CD8-positive, alpha-beta T cell (primary cell): ENCODE measurements at regions of chr12 and their contacts with region 1.

Region 1: GRCh38 chr12:69173368-69173767 is 66.0 kb upstream of the CPSF6 start:
- DNase-seq: no peak
- ATAC-seq: no peak
- H3K4me3 ChIP-seq: no peak overlapping the region
- H3K4me3 Mint-ChIP-seq: no peak overlapping the region
- H3K27ac ChIP-seq: no peak overlapping the region
- H3K27ac Mint-ChIP-seq: no peak overlapping the region
- H3K4me1 ChIP-seq: no peaks in the 10 kb centered on the region
- H3K4me1 Mint-ChIP-seq: no peaks in the 10 kb centered on the region
- H3K27me3 ChIP-seq: no peaks in the 10 kb centered on the region
- H3K27me3 Mint-ChIP-seq: peaks cover under 1% of the 10 kb centered on the region
- CTCF ChIP-seq: no peak

Region 2: GRCh38 chr12:69136931-69137613 is 36.3 kb before region 1 on chr12:
- CTCF ChIA-PET with region 1: no interaction called
- POLR2A ChIA-PET with region 1: no interaction called
- intact Hi-C with region 1: no loop called
- DNase-seq: no peak
- ATAC-seq: no peak
- H3K4me3 ChIP-seq: no peak overlapping the region
- H3K4me3 Mint-ChIP-seq: no peak overlapping the region
- H3K27ac ChIP-seq: no peak overlapping the region
- H3K27ac Mint-ChIP-seq: no peak overlapping the region
- H3K4me1 ChIP-seq: no peaks in the 10 kb centered on the region
- H3K4me1 Mint-ChIP-seq: no peaks in the 10 kb centered on the region
- H3K27me3 ChIP-seq: no peaks in the 10 kb centered on the region
- H3K27me3 Mint-ChIP-seq: peaks cover 8% of the 10 kb centered on the region
- CTCF ChIP-seq: no peak

Region 3: GRCh38 chr12:69211160-69211559 is 37.8 kb after region 1 on chr12:
- CTCF ChIA-PET with region 1: no interaction called
- POLR2A ChIA-PET with region 1: no interaction called
- intact Hi-C with region 1: loop called in 1 of 2 experiments (anchors 5 kb)
- DNase-seq: no peak
- ATAC-seq: no peak
- H3K4me3 ChIP-seq: no peak overlapping the region
- H3K4me3 Mint-ChIP-seq: no peak overlapping the region
- H3K27ac ChIP-seq: no peak overlapping the region
- H3K27ac Mint-ChIP-seq: no peak overlapping the region
- H3K4me1 ChIP-seq: no peaks in the 10 kb centered on the region
- H3K4me1 Mint-ChIP-seq: no peaks in the 10 kb centered on the region
- H3K27me3 ChIP-seq: no peaks in the 10 kb centered on the region
- H3K27me3 Mint-ChIP-seq: no peaks in the 10 kb centered on the region
- CTCF ChIP-seq: no peak